Transverse colon (tissue), 4 donors: ENCODE measurements at regions of chr18 and their contacts with region 1.

Region 1: DNA sequence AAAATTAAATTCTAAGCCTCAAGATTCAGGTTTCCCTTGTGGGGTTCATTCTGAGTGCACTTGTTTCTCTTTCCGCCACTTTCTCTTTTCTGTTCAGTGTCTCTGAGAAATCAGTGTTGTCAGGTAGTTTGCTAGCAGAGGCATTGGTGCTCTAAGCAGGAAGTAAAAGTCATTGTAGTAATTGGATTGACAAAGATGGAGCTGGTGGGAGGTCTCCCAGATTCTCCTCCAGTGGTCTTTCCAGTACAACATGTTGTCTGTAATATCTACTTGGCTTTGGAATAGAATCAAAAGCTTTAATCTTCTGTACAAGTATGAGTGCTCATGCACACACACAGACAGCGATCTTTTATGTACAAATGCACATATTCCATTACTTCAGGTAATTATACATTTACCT is 135.6 kb downstream of the KLHL14 start:
- DNase-seq: no peak
- H3K4me3 ChIP-seq: no peak overlapping the region
- H3K27ac ChIP-seq: no peak overlapping the region
- H3K4me1 ChIP-seq: no peaks in the 10 kb centered on the region
- H3K27me3 ChIP-seq: no peaks in the 10 kb centered on the region
- CTCF ChIP-seq: no peak
- EP300 ChIP-seq: no peak
- POLR2A ChIP-seq: no peak

Region 2: GRCh38 chr18:32582455-32582854 is 54.8 kb before region 1 on chr18:
- in situ Hi-C with region 1: no loop called
- intact Hi-C with region 1: no loop called
- DNase-seq: no peak
- H3K4me3 ChIP-seq: no peak overlapping the region
- H3K27ac ChIP-seq: no peak overlapping the region
- H3K4me1 ChIP-seq: no peaks in the 10 kb centered on the region
- H3K27me3 ChIP-seq: no peaks in the 10 kb centered on the region
- CTCF ChIP-seq: no peak
- EP300 ChIP-seq: no peak
- POLR2A ChIP-seq: no peak

Region 3: GRCh38 chr18:32619323-32619722 is 17.9 kb before region 1 on chr18:
- in situ Hi-C with region 1: no loop called
- intact Hi-C with region 1: loop called (anchors 1 kb)
- DNase-seq: no peak
- H3K4me3 ChIP-seq: no peak overlapping the region
- H3K27ac ChIP-seq: no peak overlapping the region
- H3K4me1 ChIP-seq: no peaks in the 10 kb centered on the region
- H3K27me3 ChIP-seq: no peaks in the 10 kb centered on the region
- CTCF ChIP-seq: no peak
- EP300 ChIP-seq: no peak
- POLR2A ChIP-seq: no peak